Endothelial cell of umbilical vein (primary cell): ENCODE measurements at regions of chr3 and their contacts with region 1.

Region 1: DNA sequence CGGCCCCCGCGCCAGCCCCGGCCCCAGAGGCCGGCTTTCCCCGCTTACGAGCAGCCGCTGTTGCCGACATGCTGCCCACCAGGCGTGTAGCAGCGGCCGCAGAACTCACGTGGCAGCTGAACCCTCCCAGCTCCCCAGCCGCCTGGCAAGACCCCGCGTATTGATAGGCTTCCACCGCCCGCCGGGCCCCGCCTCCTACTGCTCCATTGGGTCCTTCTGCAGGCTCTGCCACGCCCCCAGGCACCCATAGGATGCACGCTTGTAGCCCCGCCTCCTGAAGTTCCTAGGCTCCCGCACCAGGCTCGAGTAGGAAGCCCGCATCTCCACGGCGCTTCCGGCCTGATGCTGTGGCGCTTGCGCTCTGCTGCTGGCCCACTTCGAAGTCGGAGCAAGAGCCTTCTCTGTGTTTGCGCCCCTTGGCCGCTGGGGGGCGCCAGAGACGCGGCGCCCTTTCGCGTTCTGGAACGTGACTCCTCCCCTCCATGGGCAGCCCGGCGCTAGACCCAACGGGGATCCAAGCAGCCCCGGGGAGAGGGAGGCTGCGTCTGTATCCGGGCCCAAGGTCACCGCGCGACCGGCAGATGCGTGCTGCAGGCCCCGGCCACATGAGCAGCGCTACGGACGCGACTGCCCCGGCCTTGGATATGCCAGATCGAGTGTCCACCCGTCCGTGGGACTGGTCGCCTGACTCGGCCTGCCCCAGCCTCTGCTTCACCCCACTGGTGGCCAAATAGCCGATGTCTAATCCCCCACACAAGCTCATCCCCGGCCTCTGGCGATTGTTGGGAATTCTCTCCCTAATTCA is at the starts of genes PARP3 and RRP9:
- DNase-seq: peak; percentile 100
- H3K4me3 ChIP-seq: peak within 1 kb of the TSS; percentile 66 to 81 (median 79)
- H3K27ac ChIP-seq: peak within 1 kb of the TSS; percentile 80
- H3K4me1 ChIP-seq: peaks cover 21% of the 10 kb centered on the region
- H3K27me3 ChIP-seq: no peaks in the 10 kb centered on the region
- CTCF ChIP-seq: peak; percentile 100
- POLR2A ChIP-seq: peak; percentile 73
- total RNA-seq, gene PARP3: 10.0 and 11.0 TPM in 2 replicates
- total RNA-seq, gene RRP9: 23.8 and 30.1 TPM in 2 replicates

Region 2: DNA sequence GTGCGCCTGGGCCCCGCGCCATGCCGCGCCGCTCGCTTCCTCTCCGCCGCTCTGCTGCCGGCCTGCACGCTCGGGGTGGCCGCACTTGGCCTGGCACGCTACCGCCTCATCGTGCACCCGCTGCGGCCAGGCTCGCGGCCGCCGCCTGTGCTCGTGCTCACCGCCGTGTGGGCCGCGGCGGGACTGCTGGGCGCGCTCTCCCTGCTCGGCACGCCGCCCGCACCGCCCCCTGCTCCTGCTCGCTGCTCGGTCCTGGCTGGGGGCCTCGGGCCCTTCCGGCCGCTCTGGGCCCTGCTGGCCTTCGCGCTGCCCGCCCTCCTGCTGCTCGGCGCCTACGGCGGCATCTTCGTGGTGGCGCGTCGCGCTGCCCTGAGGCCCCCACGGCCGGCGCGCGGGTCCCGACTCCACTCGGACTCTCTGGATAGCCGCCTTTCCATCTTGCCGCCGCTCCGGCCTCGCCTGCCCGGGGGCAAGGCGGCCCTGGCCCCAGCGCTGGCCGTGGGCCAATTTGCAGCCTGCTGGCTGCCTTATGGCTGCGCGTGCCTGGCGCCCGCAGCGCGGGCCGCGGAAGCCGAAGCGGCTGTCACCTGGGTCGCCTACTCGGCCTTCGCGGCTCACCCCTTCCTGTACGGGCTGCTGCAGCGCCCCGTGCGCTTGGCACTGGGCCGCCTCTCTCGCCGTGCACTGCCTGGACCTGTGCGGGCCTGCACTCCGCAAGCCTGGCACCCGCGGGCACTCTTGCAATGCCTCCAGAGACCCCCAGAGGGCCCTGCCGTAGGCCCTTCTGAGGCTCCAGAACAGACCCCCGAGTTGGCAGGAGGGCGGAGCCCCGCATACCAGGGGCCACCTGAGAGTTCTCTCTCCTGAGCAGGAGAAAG is 14.1 kb after region 1 on chr3:
- CTCF ChIA-PET with region 1: interaction called, 8 read pairs
- POLR2A ChIA-PET with region 1: interaction called, 4 read pairs
- dilution Hi-C with region 1: no loop called
- intact Hi-C with region 1: loop called (anchors 1 kb)
- DNase-seq: peak; percentile 69
- H3K4me3 ChIP-seq: peak overlapping the region in 2 of 3 experiments; percentile 5 to 10
- H3K27ac ChIP-seq: no peak overlapping the region
- H3K4me1 ChIP-seq: no peaks in the 10 kb centered on the region
- H3K27me3 ChIP-seq: peaks cover 7 to 13% of the 10 kb centered on the region in 2 experiments
- CTCF ChIP-seq: peak; percentile 62 to 76
- POLR2A ChIP-seq: no peak

Region 3: DNA sequence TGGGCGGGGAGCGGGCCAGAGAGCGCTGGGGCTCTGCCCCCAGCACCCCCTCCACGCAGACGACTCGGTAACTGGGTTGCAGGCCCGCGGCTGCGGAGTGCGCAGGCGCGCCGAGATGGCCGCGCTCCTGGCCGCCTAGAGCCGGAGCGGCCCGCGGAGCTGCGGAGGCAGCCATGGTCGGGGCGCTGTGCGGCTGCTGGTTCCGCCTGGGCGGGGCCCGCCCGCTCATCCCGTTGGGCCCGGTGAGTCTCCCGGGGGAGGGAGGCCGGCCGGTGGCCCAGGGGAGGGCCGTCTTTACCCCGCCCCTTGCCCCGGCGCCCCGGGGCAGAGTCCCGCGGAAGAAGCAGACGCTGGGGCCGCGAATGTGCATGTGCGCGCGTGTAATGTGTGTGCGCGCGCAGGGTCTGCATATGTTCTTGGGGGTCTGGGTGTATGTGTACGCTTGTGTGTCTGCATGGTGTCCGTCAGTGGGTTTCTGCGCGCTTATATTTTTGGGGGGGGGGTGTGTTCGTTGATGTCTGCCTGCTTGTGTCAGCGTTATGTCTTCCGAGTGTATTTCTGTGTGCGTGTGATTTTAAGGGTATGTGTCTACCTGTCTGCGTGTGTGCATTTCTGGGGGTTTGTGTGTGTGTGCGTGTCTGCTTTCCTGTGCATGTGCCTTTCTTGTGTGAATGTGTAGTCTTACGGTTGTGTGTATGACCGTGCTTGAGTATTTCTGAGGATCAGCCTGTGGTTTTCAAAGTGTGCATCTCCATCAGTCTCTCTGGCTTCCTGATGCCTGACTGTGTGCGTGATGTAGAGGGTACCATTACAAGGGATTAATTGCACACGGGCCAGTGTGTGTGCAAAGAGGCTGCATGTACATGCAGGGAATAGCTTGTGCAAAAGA is 33.2 kb after region 1 on chr3 and contains the start of gene ABHD14A:
- CTCF ChIA-PET with region 1: interaction called, 46 read pairs
- POLR2A ChIA-PET with region 1: interaction called, 4 read pairs
- dilution Hi-C with region 1: no loop called
- intact Hi-C with region 1: loop called (anchors 1 kb)
- DNase-seq: peak; percentile 63
- H3K4me3 ChIP-seq: peak within 1 kb of the TSS; percentile 12 to 68 (median 63)
- H3K27ac ChIP-seq: peak within 1 kb of the TSS; percentile 55
- H3K4me1 ChIP-seq: peaks cover 22% of the 10 kb centered on the region
- H3K27me3 ChIP-seq: no peaks in the 10 kb centered on the region
- CTCF ChIP-seq: no peak
- POLR2A ChIP-seq: peak; percentile 87
- total RNA-seq, gene ABHD14A: 6.6 and 8.2 TPM in 2 replicates

Region 4: GRCh38 chr3:51995346-51996163 is 53.6 kb after region 1 on chr3 and contains the start of gene RPL29:
- CTCF ChIA-PET with region 1: interaction called, 5 read pairs
- POLR2A ChIA-PET with region 1: interaction called, 6 read pairs
- dilution Hi-C with region 1: no loop called
- intact Hi-C with region 1: loop called (anchors 1 kb)
- DNase-seq: peak; percentile 96
- H3K4me3 ChIP-seq: peak within 1 kb of the TSS; percentile 67 to 96 (median 91)
- H3K27ac ChIP-seq: peak within 1 kb of the TSS; percentile 89
- H3K4me1 ChIP-seq: peaks cover 19% of the 10 kb centered on the region
- H3K27me3 ChIP-seq: no peaks in the 10 kb centered on the region
- CTCF ChIP-seq: no peak
- POLR2A ChIP-seq: peak; percentile 97
- total RNA-seq, gene RPL29: 1,127 and 1,236 TPM in 2 replicates

Region 5: GRCh38 chr3:52144034-52144795 is 202.2 kb after region 1 on chr3:
- CTCF ChIA-PET with region 1: interaction called, 4 read pairs
- POLR2A ChIA-PET with region 1: no interaction called
- dilution Hi-C with region 1: no loop called
- intact Hi-C with region 1: loop called (anchors 1 kb)
- DNase-seq: peak; percentile 63
- H3K4me3 ChIP-seq: no peak overlapping the region
- H3K27ac ChIP-seq: no peak overlapping the region
- H3K4me1 ChIP-seq: no peaks in the 10 kb centered on the region
- H3K27me3 ChIP-seq: no peaks in the 10 kb centered on the region
- CTCF ChIP-seq: peak; percentile 93 to 94
- POLR2A ChIP-seq: no peak